Caco-2 (cell line): ENCODE measurements at regions of chr4 and their contacts with region 1.

Region 1: DNA sequence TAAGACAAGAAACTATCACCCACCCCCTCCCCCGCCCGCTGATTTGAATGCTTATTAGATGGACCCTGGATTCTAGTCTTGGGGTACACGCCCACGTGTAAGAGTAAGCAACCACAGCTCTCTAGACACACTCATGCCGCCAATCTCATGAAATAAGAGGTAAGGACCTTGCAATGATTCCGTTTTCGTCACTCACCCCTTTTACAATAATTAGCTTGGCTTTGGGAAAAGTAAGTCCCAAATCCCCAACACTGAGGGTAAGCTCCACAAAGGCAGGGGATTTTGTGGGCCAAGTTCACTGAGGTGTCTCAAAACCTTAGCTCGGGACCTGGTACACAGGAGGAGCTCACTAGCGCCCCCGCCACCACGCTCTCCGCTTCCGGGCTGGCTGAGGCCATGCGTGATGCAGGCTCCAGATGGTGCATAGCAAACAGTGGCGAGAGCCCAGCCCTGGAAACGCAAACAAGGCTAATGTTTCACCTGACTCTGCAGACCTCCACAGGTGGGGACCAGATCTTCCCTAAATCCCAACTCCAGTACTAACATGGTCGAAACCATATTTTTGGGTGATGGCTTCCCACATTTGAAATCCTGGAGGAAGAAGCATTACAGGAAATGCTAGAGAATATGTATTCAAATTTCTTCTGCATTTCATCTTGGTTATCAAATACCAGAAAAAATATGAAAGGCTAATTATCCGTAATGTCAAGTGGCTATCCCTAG is 4.1 kb downstream of the PLAC8 start:
- DNase-seq: peak; percentile 87 to 89
- H3K4me3 ChIP-seq: peak overlapping the region; percentile 51
- H3K4me3 Mint-ChIP-seq: peak overlapping the region; percentile 79
- H3K27ac Mint-ChIP-seq: peak overlapping the region; percentile 64
- H3K4me1 ChIP-seq: peaks cover 22% of the 10 kb centered on the region
- H3K4me1 Mint-ChIP-seq: peaks cover 24% of the 10 kb centered on the region
- H3K27me3 ChIP-seq: no peaks in the 10 kb centered on the region
- H3K27me3 Mint-ChIP-seq: no peaks in the 10 kb centered on the region
- CTCF ChIP-seq: peak; percentile 52 to 60

Region 2: DNA sequence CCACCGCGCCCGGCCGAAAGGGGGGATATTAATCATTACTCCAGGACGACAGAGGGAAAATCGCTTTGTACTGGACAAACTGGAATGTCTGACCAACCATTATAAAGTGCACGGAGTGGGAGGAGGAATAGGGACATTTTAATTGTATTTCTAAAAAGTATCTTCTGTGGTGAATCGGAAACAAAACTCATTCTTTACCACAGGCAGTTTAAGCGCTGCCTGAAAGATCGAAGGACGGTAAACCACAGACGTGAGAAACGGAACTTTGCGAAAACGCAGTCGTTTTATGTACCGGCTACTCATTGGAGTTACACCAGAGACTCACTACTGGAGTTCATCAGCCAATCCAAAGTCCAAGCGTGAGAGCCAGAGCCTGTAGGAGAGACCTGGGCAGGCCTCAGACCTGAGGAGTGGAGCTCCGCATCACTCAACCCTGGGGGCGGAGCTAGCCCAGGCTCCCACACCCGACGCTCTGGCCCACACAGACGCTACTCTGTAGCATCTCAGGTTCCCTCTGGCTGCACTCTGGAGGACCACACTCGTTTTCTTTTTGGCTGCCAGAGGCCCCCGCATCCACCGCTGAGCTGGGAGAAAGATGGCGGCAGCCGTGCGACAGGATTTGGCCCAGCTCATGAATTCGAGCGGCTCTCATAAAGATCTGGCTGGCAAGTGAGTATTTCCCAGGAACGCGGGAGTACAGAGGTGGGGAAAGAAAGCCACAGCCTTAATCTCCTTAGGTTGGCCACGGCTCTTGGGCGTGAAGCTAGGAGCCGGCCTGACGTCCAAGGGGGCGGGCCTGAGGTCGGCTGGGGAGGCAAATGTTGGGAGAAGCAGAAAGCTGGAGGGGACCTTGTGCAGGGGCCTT is 75.5 kb before region 1 on chr4 and contains the start of gene COPS4:
- CTCF ChIA-PET with region 1: interaction called, 13 read pairs
- POLR2A ChIA-PET with region 1: interaction called, 8 read pairs
- intact Hi-C with region 1: no loop called
- DNase-seq: peak; percentile 97 to 98
- H3K4me3 ChIP-seq: peak within 1 kb of the TSS; percentile 80
- H3K4me3 Mint-ChIP-seq: peak within 1 kb of the TSS; percentile 98
- H3K27ac Mint-ChIP-seq: peak within 1 kb of the TSS; percentile 97
- H3K4me1 ChIP-seq: peaks cover 4% of the 10 kb centered on the region; the same call in 1 of the 2 replicates
- H3K4me1 Mint-ChIP-seq: no peaks in the 10 kb centered on the region
- H3K27me3 ChIP-seq: no peaks in the 10 kb centered on the region; the same call in 1 of the 2 replicates
- H3K27me3 Mint-ChIP-seq: no peaks in the 10 kb centered on the region
- CTCF ChIP-seq: peak; percentile 24 to 43
- total RNA-seq, gene COPS4: 34.5 and 36.3 TPM in 2 replicates

Region 3: DNA sequence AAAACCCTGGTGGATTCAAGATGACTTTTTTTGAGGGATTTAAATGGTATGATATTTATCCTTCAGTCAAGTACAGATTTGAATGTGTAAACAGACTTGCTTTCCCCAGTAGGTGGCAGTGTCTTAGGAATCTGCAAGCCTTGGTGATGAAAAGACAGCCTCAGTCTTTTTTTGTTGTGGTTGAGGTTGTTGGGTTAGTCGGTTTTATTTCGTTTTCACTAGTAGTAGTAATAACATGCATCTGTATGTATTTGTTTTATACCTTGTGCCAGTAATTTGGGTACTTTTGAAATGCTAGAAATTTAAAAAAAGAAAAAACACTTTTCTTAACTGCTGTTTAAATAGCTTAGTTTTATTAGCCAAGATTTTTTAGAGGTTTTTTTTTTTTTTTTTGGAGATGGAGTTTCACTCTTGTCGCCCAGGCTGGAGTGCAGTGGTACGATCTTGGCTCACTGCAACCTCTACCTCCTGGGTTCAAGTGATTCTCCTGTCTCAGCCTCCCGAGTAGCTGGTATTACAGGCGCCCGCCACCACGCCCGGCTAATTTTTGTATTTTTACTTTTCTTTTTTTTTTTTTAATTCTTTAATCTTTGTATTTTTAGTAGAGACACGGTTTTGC is 36.2 kb before region 1 on chr4:
- CTCF ChIA-PET with region 1: interaction called, 4 read pairs
- POLR2A ChIA-PET with region 1: interaction called, 4 read pairs
- intact Hi-C with region 1: loop called (anchors 1 kb)
- DNase-seq: peak; percentile 46 to 66
- H3K4me3 ChIP-seq: no peak overlapping the region
- H3K4me3 Mint-ChIP-seq: no peak overlapping the region
- H3K27ac Mint-ChIP-seq: no peak overlapping the region
- H3K4me1 ChIP-seq: no peaks in the 10 kb centered on the region
- H3K4me1 Mint-ChIP-seq: no peaks in the 10 kb centered on the region
- H3K27me3 ChIP-seq: no peaks in the 10 kb centered on the region
- H3K27me3 Mint-ChIP-seq: no peaks in the 10 kb centered on the region
- CTCF ChIP-seq: peak; percentile 43 to 55

Region 4: DNA sequence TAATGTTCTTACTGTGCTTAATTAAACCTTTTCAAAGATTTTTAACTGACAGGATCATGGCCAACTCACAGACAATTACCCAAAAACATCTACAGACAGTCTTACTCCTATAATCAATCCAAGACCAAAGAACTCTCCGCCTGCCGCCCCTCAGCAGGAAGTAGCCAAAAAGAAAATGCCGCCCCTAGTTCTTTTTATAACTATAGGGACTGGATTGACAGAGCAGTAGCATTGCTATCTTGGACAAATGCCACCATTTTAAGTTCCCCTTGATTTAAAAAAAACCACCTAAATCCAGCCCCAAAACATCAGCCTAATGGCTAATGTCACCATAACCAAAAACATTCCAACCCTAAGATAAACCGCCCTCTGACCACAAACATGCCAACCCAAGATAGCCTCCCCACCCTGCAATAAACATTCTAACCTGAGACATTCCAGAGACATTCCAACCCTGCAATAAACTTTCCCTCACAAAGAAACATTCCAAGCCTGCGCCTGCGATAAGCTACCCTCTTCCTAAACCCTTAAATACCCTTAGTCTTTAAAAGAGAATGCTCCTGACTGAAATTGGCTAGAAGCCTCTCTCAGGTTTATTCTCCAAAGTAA is 97.2 kb after region 1 on chr4:
- CTCF ChIA-PET with region 1: no interaction called
- POLR2A ChIA-PET with region 1: no interaction called
- intact Hi-C with region 1: loop called (anchors 5 kb)
- DNase-seq: peak; percentile 75 to 81
- H3K4me3 ChIP-seq: no peak overlapping the region
- H3K4me3 Mint-ChIP-seq: peak overlapping the region; percentile 67
- H3K27ac Mint-ChIP-seq: no peak overlapping the region
- H3K4me1 ChIP-seq: peaks cover 27% of the 10 kb centered on the region
- H3K4me1 Mint-ChIP-seq: peaks cover 18% of the 10 kb centered on the region
- H3K27me3 ChIP-seq: no peaks in the 10 kb centered on the region
- H3K27me3 Mint-ChIP-seq: no peaks in the 10 kb centered on the region
- CTCF ChIP-seq: no peak

Region 5: GRCh38 chr4:83240379-83240875 is 130.0 kb after region 1 on chr4:
- CTCF ChIA-PET with region 1: no interaction called
- POLR2A ChIA-PET with region 1: no interaction called
- intact Hi-C with region 1: no loop called
- DNase-seq: no peak
- H3K4me3 ChIP-seq: no peak overlapping the region
- H3K4me3 Mint-ChIP-seq: no peak overlapping the region
- H3K27ac Mint-ChIP-seq: no peak overlapping the region
- H3K4me1 ChIP-seq: no peaks in the 10 kb centered on the region
- H3K4me1 Mint-ChIP-seq: peaks cover 6% of the 10 kb centered on the region
- H3K27me3 ChIP-seq: no peaks in the 10 kb centered on the region
- H3K27me3 Mint-ChIP-seq: no peaks in the 10 kb centered on the region
- CTCF ChIP-seq: no peak

Region 6: GRCh38 chr4:83261307-83261706 is 150.9 kb after region 1 on chr4:
- CTCF ChIA-PET with region 1: interaction called, 5 read pairs
- POLR2A ChIA-PET with region 1: no interaction called
- intact Hi-C with region 1: loop called (anchors 2 kb)
- DNase-seq: no peak
- H3K4me3 ChIP-seq: no peak overlapping the region
- H3K4me3 Mint-ChIP-seq: no peak overlapping the region
- H3K27ac Mint-ChIP-seq: no peak overlapping the region
- H3K4me1 ChIP-seq: peaks cover 8% of the 10 kb centered on the region; the same call in 1 of the 2 replicates
- H3K4me1 Mint-ChIP-seq: no peaks in the 10 kb centered on the region
- H3K27me3 ChIP-seq: no peaks in the 10 kb centered on the region
- H3K27me3 Mint-ChIP-seq: no peaks in the 10 kb centered on the region
- CTCF ChIP-seq: no peak